ENCODE measurements at regions of chr19 and their contacts with region 1.

Region 1: GRCh38 chr19:6602729-6603114 is 11.8 kb upstream of the CD70 start:
- DNase-seq: no peak
- ATAC-seq: no peak
- H3K4me3 ChIP-seq: no peak overlapping the region
- H3K27ac ChIP-seq: no peak overlapping the region
- H3K4me1 ChIP-seq: no peaks in the 10 kb centered on the region
- H3K27me3 ChIP-seq: no peaks in the 10 kb centered on the region
- CTCF ChIP-seq: no peak

Region 2: DNA sequence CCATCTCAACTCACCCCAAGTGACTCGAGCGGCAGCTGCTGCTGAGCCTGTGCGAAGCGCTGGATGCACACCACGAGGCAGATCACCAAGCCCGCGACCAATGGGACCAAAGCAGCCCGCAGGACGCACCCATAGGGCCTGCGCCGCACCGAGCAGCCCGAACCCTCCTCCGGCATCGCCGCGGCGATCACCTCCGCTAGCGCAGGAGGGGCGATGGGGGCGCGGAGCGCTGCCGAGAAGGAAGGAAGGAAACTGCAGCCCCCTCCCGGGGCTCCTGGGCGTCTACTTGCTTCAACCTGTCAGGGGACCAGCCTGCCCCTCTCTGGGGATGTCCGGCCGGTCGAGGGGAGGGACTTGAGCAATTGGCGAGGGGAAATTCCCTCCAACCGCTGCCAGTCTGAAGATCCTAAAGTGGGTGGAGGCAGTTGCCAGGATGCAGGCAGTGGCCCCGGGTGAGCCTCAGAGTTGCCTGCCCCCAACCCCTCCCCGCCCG is 11.8 kb before region 1 on chr19 and contains the start of gene CD70:
- CTCF ChIA-PET with region 1: no interaction called
- POLR2A ChIA-PET with region 1: interaction called, 11 read pairs
- in situ Hi-C with region 1: no loop called
- intact Hi-C with region 1: no loop called
- DNase-seq: no peak
- ATAC-seq: peak; percentile 92
- H3K4me3 ChIP-seq: peak within 1 kb of the TSS; percentile 56 to 84
- H3K27ac ChIP-seq: peak within 1 kb of the TSS; percentile 86
- H3K4me1 ChIP-seq: peaks cover 6% of the 10 kb centered on the region; the same call in 1 of the 2 replicates
- H3K27me3 ChIP-seq: no peaks in the 10 kb centered on the region
- CTCF ChIP-seq: no peak
- total RNA-seq, gene CD70: 45.4 TPM

Region 3: GRCh38 chr19:6694147-6694815 is 91.6 kb after region 1 on chr19:
- CTCF ChIA-PET with region 1: no interaction called
- POLR2A ChIA-PET with region 1: no interaction called
- in situ Hi-C with region 1: no loop called
- intact Hi-C with region 1: no loop called
- DNase-seq: no peak
- ATAC-seq: no peak; the same call in 1 of the 2 replicates
- H3K4me3 ChIP-seq: no peak overlapping the region
- H3K27ac ChIP-seq: no peak overlapping the region
- H3K4me1 ChIP-seq: no peaks in the 10 kb centered on the region
- H3K27me3 ChIP-seq: no peaks in the 10 kb centered on the region
- CTCF ChIP-seq: no peak

Region 4: GRCh38 chr19:6963937-6964336 is 361.2 kb after region 1 on chr19:
- CTCF ChIA-PET with region 1: interaction called, 15 read pairs
- POLR2A ChIA-PET with region 1: no interaction called
- in situ Hi-C with region 1: no loop called
- intact Hi-C with region 1: no loop called
- DNase-seq: no peak
- ATAC-seq: no peak
- H3K4me3 ChIP-seq: no peak overlapping the region
- H3K27ac ChIP-seq: no peak overlapping the region
- H3K4me1 ChIP-seq: no peaks in the 10 kb centered on the region
- H3K27me3 ChIP-seq: peaks cover 2% of the 10 kb centered on the region; the same call in 1 of the 2 replicates
- CTCF ChIP-seq: peak; percentile 69

Measured in Panc1 (cell line).